Head of caudate nucleus (tissue), 42 donors: ENCODE measurements at regions of chr15 and their contacts with region 1.

Region 1: DNA sequence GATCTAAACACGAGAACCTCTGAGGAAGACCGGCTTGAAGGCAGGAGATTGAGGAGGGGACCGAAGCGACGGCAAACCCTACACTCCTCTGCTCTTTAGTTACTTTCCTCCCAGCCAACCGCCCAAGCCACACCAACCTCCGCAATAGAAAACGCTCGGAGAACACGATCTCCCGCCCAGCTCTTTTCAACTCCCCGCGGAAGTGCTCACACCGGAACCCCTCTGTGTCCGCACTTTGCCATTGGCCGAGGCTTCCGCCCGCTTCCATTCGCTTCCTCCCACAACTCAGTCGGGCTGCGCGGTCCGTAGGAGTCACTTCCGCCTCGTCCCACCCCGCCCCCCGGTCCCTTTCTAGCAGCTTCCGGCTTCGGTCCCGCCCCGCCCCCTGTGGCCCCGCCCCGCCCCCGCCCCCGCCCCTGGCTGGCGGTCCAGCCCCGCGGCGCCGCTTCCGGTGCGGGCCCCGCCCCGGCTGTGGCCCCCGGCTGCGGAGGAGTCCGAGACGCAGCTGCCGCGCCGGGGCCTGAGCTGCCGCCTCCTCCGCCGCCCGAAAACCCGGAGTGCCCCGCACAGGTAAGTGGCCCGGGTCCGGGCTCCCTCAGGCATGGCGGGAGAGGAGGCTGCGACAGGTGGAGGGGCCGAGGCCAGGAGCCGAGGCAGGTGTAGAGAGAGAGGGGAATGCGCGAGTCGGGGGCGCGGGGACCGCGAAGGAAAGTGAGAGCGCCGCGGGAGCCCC is at the start of gene ARID3B:
- DNase-seq: peak; percentile 92 to 99 (median 96)

Region 2: DNA sequence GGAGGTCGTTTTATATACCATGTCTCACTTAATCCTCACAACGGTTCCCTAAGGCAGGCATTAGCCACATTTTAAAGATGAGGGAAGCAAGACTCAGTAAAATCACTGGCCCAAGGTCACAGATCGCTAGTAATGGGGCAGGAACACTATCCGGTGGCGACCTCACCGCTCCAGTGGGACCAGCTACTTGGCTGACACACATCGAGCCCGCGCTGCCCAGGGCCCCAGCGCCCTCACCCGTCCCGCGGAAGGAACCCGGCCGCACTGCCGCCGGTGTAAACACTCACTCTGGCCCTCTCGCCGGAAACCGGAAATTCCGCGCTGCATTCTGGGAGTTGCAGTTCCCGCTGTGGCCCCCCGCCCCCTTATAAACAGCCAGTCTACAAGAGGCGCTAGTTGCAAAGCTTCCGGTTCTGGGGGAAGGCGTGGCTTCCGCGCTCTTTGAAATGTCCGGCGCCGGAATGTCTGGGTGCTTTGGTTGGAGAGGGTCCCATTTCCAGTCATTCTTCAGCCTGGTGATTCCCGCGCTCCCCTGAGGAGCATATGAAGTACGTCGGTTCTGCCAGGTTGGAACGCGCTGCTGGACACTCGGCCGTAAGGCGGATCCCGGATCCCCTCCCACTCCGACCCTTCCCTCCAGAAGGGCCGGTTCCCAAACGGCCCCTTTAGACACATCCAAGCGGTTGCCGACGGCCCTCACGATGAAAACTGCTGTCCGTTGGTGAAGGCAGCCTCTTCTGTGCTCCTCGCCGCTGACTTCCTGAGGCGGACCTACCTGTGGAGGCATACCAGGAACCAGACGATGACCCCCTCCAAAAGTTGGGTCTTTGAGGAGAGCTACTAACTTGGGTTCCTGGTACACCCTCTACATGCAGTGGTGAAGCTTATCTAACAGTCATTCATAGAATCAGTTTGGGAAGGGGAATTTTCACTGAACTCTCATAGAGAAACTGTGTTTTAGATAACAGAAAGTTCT is 79.8 kb before region 1 on chr15 and contains the start of gene UBL7:
- intact Hi-C with region 1: loop called (anchors 5 kb)
- DNase-seq: peak; percentile 93 to 99 (median 98)

Region 3: DNA sequence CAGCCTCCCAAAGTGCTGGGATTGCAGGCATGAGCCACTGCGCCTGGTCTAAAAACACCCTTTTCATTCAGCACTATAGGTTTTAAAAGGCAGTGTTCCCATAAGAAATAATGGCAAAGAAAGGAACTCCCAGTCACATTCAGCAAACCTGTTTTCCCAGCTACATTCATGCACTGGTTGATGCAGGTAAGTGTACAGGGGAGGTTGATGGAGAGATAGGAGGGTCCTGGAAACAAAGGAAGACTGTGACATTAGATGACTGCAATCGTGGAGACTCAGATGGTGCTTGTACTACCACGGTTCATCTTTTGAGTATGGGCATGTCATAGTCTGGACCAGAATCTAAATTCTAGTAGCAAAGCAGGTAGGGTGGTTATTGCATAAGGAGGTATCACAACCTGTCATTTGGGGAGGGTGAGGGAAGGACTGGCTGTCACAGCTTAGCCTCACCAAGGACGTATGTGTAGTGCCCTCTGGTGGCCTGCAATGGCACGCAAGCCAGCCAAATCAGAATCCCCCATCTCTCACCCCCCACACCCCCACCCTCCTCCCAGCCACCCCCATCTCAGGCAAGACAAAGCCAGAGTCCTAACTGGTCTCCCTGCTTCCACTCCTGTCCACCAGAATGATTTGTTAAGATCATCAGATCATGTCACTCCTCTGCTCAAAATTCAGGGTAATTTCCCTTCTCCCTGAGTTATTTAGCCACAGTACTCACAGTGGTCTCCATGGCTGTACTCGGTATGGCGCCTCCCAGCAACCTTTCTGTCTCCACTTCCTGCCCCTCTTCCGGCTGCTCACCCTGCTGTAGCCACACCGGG is 51.2 kb before region 1 on chr15:
- intact Hi-C with region 1: no loop called
- DNase-seq: peak; percentile 24 to 82 (median 56)

Region 4: GRCh38 chr15:74519311-74519710 is 21.6 kb before region 1 on chr15:
- intact Hi-C with region 1: no loop called
- DNase-seq: no peak